ENCODE measurements at regions of chr1 and their contacts with region 1.

Region 1: GRCh38 chr1:165738794-165739193 is 29.9 kb downstream of the TMCO1 start:
- DNase-seq: no peak
- H3K4me3 ChIP-seq: no peak overlapping the region
- H3K27ac ChIP-seq: no peak overlapping the region
- H3K4me1 ChIP-seq: no peaks in the 10 kb centered on the region
- H3K27me3 ChIP-seq: no peaks in the 10 kb centered on the region
- CTCF ChIP-seq: no peak

Region 2: GRCh38 chr1:166184897-166185296 is 446.1 kb after region 1 on chr1:
- CTCF ChIA-PET with region 1: no interaction called
- POLR2A ChIA-PET with region 1: interaction called, 11 read pairs
- intact Hi-C with region 1: no loop called
- DNase-seq: no peak
- H3K4me3 ChIP-seq: no peak overlapping the region
- H3K27ac ChIP-seq: no peak overlapping the region
- H3K4me1 ChIP-seq: no peaks in the 10 kb centered on the region
- H3K27me3 ChIP-seq: peaks cover 24% of the 10 kb centered on the region
- CTCF ChIP-seq: no peak